Transverse colon (tissue), 4 donors: ENCODE measurements at regions of chr11 and their contacts with region 1.

Region 1: GRCh38 chr11:40537734-40538133 is 921.7 kb downstream of the LRRC4C start:
- DNase-seq: no peak
- H3K4me3 ChIP-seq: no peak overlapping the region
- H3K27ac ChIP-seq: no peak overlapping the region
- H3K4me1 ChIP-seq: no peaks in the 10 kb centered on the region
- H3K27me3 ChIP-seq: no peaks in the 10 kb centered on the region
- CTCF ChIP-seq: no peak
- EP300 ChIP-seq: no peak
- POLR2A ChIP-seq: no peak

Region 2: GRCh38 chr11:40508303-40508702 is 29.4 kb before region 1 on chr11:
- in situ Hi-C with region 1: no loop called
- intact Hi-C with region 1: loop called (anchors 1 kb)
- DNase-seq: no peak
- H3K4me3 ChIP-seq: no peak overlapping the region
- H3K27ac ChIP-seq: no peak overlapping the region
- H3K4me1 ChIP-seq: no peaks in the 10 kb centered on the region
- H3K27me3 ChIP-seq: no peaks in the 10 kb centered on the region
- CTCF ChIP-seq: no peak
- EP300 ChIP-seq: no peak
- POLR2A ChIP-seq: no peak